ENCODE measurements at regions of chr15 and their contacts with region 1.

Region 1: DNA sequence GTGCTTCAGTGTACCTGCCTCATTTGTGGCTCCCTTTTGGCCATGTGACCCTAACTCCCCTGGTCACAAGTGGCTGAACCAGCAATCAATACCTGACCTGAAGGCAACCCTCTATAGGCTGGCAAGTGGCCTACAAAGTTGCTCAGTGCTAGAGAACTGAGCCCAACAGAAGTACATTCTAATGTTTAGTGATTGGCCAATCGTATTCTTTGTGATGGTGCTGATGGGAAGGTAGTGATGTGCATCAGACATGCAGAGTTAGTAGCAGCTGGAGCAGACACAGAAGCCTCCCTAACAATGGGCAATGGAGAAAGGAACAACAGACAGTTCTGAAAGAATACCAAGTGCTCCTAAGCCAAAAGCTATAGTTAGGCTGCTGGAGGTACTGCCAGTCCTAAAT is 10.4 kb upstream of the ATOSA start:
- DNase-seq: no peak
- ATAC-seq: no peak
- H3K4me3 ChIP-seq: no peak overlapping the region
- H3K4me3 Mint-ChIP-seq: no peak overlapping the region
- H3K27ac ChIP-seq: no peak overlapping the region
- H3K27ac Mint-ChIP-seq: no peak overlapping the region
- H3K4me1 ChIP-seq: no peaks in the 10 kb centered on the region
- H3K4me1 Mint-ChIP-seq: no peaks in the 10 kb centered on the region
- H3K27me3 ChIP-seq: no peaks in the 10 kb centered on the region
- H3K27me3 Mint-ChIP-seq: no peaks in the 10 kb centered on the region
- CTCF ChIP-seq: no peak

Region 2: GRCh38 chr15:52730173-52730572 is 40.6 kb after region 1 on chr15:
- CTCF ChIA-PET with region 1: interaction called, 3 read pairs
- POLR2A ChIA-PET with region 1: no interaction called
- intact Hi-C with region 1: loop called in 1 of 2 experiments (anchors 2 kb)
- DNase-seq: peak in 13 of 14 experiments; percentile 10 to 86 (median 38)
- ATAC-seq: peak; percentile 100
- H3K4me3 ChIP-seq: no peak overlapping the region
- H3K4me3 Mint-ChIP-seq: no peak overlapping the region
- H3K27ac ChIP-seq: no peak overlapping the region
- H3K27ac Mint-ChIP-seq: peak overlapping the region; percentile 57
- H3K4me1 ChIP-seq: peaks cover 16% of the 10 kb centered on the region
- H3K4me1 Mint-ChIP-seq: peaks cover 9% of the 10 kb centered on the region
- H3K27me3 ChIP-seq: no peaks in the 10 kb centered on the region
- H3K27me3 Mint-ChIP-seq: no peaks in the 10 kb centered on the region
- CTCF ChIP-seq: peak; percentile 41

Region 3: DNA sequence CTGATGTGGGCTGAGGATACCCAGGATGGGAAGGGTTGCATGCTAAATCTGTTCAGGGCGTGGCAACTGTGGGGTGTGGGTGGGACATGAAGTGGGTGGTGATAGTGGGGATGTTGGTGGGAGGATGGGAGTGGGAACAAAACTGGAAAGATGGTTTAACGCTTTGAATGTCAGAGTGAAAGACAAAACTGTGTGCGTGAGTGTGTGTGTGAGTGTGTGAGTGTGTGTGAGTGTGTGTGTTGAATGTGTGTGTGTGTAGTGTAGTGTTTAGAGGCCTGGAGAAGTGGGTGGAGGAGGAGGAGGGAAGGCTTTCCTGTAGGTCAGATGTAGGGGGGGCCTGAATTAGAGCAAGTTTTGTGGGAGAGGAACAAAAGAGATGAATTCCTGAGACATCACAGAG is 144.8 kb after region 1 on chr15:
- CTCF ChIA-PET with region 1: no interaction called
- POLR2A ChIA-PET with region 1: no interaction called
- intact Hi-C with region 1: no loop called
- DNase-seq: no peak
- ATAC-seq: no peak
- H3K4me3 ChIP-seq: no peak overlapping the region
- H3K4me3 Mint-ChIP-seq: no peak overlapping the region
- H3K27ac ChIP-seq: no peak overlapping the region
- H3K27ac Mint-ChIP-seq: no peak overlapping the region
- H3K4me1 ChIP-seq: no peaks in the 10 kb centered on the region
- H3K4me1 Mint-ChIP-seq: no peaks in the 10 kb centered on the region
- H3K27me3 ChIP-seq: peaks cover 0 to 6% of the 10 kb centered on the region in 2 experiments
- H3K27me3 Mint-ChIP-seq: peaks cover 38% of the 10 kb centered on the region
- CTCF ChIP-seq: no peak